Calu3 (cell line): ENCODE measurements at regions of chr6 and their contacts with region 1.

Region 1: GRCh38 chr6:107459283-107460082 is at the start of gene PDSS2:
- DNase-seq: peak; percentile 97
- H3K4me3 Mint-ChIP-seq: peak within 1 kb of the TSS; percentile 99
- H3K27ac Mint-ChIP-seq: peak within 1 kb of the TSS; percentile 90
- H3K4me1 Mint-ChIP-seq: peaks cover 13% of the 10 kb centered on the region
- H3K27me3 Mint-ChIP-seq: no peaks in the 10 kb centered on the region
- CTCF ChIP-seq: peak; percentile 32
- total RNA-seq, gene PDSS2: 14.6 and 14.8 TPM in 2 replicates

Region 2: GRCh38 chr6:107114213-107114905 is 345.1 kb before region 1 on chr6:
- CTCF ChIA-PET with region 1: no interaction called
- intact Hi-C with region 1: loop called (anchors 10 kb)
- DNase-seq: peak; percentile 92
- H3K4me3 Mint-ChIP-seq: peak overlapping the region; percentile 69
- H3K27ac Mint-ChIP-seq: peak overlapping the region; percentile 85
- H3K4me1 Mint-ChIP-seq: no peaks in the 10 kb centered on the region
- H3K27me3 Mint-ChIP-seq: no peaks in the 10 kb centered on the region
- CTCF ChIP-seq: peak; percentile 93

Region 3: DNA sequence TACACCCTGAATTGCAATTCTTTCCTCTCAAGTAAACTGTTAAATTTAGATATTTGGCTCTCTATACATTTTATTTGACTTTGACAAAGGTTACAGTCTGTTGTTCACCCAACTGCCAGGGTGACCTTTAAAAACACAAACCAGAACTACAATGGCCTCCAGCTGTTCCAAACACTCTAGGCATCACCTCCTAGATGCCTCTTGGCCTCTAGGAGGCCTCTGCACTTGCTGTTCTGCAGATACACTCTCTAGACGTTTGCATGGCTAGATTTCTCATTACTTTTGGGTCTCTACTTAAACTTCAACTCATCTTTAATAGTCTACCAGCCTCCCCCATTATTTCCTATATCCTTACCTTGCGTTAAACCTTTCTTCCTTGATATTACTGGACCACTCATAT is 241.3 kb before region 1 on chr6:
- CTCF ChIA-PET with region 1: no interaction called
- intact Hi-C with region 1: no loop called
- DNase-seq: no peak
- H3K4me3 Mint-ChIP-seq: no peak overlapping the region
- H3K27ac Mint-ChIP-seq: no peak overlapping the region
- H3K4me1 Mint-ChIP-seq: no peaks in the 10 kb centered on the region
- H3K27me3 Mint-ChIP-seq: no peaks in the 10 kb centered on the region
- CTCF ChIP-seq: no peak

Region 4: GRCh38 chr6:107318100-107318736 is 141.3 kb before region 1 on chr6:
- CTCF ChIA-PET with region 1: interaction called, 10 read pairs
- intact Hi-C with region 1: loop called (anchors 2 kb)
- DNase-seq: peak; percentile 60
- H3K4me3 Mint-ChIP-seq: no peak overlapping the region
- H3K27ac Mint-ChIP-seq: no peak overlapping the region
- H3K4me1 Mint-ChIP-seq: no peaks in the 10 kb centered on the region
- H3K27me3 Mint-ChIP-seq: no peaks in the 10 kb centered on the region
- CTCF ChIP-seq: peak; percentile 47

Region 5: GRCh38 chr6:107485157-107485556 is 25.7 kb after region 1 on chr6:
- CTCF ChIA-PET with region 1: no interaction called
- intact Hi-C with region 1: no loop called
- DNase-seq: no peak
- H3K4me3 Mint-ChIP-seq: no peak overlapping the region
- H3K27ac Mint-ChIP-seq: no peak overlapping the region
- H3K4me1 Mint-ChIP-seq: peaks cover 17% of the 10 kb centered on the region
- H3K27me3 Mint-ChIP-seq: peaks cover 59% of the 10 kb centered on the region
- CTCF ChIP-seq: no peak

Region 6: GRCh38 chr6:107657755-107658461 is 198.4 kb after region 1 on chr6:
- CTCF ChIA-PET with region 1: interaction called, 3 read pairs
- intact Hi-C with region 1: loop called (anchors 5 kb)
- DNase-seq: no peak
- H3K4me3 Mint-ChIP-seq: no peak overlapping the region
- H3K27ac Mint-ChIP-seq: no peak overlapping the region
- H3K4me1 Mint-ChIP-seq: peaks cover 57% of the 10 kb centered on the region
- H3K27me3 Mint-ChIP-seq: no peaks in the 10 kb centered on the region
- CTCF ChIP-seq: no peak